ENCODE measurements at regions of chr5 and their contacts with region 1.

Region 1: GRCh38 chr5:177320879-177321278 is 9.2 kb upstream of the MXD3 start:
- DNase-seq: no peak
- H3K4me3 ChIP-seq: no peak overlapping the region
- CTCF ChIP-seq: no peak

Region 2: GRCh38 chr5:177362610-177363507 is 42.0 kb after region 1 on chr5:
- in situ Hi-C with region 1: loop called (anchors 5 kb)
- DNase-seq: no peak
- H3K4me3 ChIP-seq: peak overlapping the region; percentile 36
- CTCF ChIP-seq: peak; percentile 1